BJ (cell line): ENCODE measurements at regions of chr19 and their contacts with region 1.

Region 1: DNA sequence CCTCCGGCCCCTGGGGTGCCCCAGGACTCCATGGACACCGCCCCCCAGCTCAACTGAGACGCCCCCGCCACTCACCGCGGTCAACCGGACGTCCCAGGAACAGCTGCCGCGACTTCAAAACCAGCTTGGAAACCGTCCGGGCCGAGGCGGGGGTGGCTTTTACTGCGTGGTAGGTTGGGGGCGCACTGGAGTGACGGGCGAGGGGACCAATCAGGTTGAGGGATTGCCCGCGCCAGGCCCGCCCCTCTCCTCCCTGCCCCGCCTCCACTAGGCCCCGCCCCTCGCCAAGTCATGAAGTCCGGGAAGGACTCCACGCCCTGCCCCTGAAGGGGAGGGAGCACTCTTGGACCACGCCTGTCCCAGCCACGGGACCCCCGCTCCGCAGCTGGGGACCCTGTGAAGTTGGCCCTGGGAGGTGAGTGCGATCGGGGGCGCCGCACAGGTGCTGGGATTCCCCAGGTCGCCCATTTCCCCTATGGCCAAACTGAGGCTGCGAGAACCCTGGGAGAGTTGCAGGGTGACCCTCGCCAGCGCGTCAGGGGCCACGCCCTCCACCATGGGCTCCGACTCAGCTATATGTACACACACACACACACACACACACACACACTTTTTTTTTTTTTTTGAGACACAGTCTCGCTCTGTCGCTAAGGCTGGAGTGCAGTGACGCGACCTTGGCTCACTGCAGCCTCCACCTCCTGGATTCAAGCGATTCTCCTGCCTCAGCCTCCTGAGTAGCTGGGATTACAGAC is at the start of gene PLIN3:
- DNase-seq: peak; percentile 67
- H3K4me3 ChIP-seq: peak within 1 kb of the TSS; percentile 92
- H3K27me3 ChIP-seq: no peaks in the 10 kb centered on the region
- CTCF ChIP-seq: no peak
- polyA plus RNA-seq, gene PLIN3: 128 and 211 TPM in 2 replicates

Region 2: GRCh38 chr19:4800591-4801355 is 66.9 kb before region 1 on chr19:
- CTCF ChIA-PET with region 1: no interaction called
- POLR2A ChIA-PET with region 1: no interaction called
- DNase-seq: no peak
- H3K4me3 ChIP-seq: no peak overlapping the region
- H3K27me3 ChIP-seq: no peaks in the 10 kb centered on the region
- CTCF ChIP-seq: no peak

Region 3: GRCh38 chr19:4815426-4816201 is 52.1 kb before region 1 on chr19:
- CTCF ChIA-PET with region 1: interaction called, 19 read pairs
- POLR2A ChIA-PET with region 1: no interaction called
- DNase-seq: no peak
- H3K4me3 ChIP-seq: no peak overlapping the region
- H3K27me3 ChIP-seq: no peaks in the 10 kb centered on the region
- CTCF ChIP-seq: no peak

Region 4: GRCh38 chr19:4851551-4852290 is 16.0 kb before region 1 on chr19:
- CTCF ChIA-PET with region 1: interaction called, 16 read pairs
- POLR2A ChIA-PET with region 1: no interaction called
- DNase-seq: no peak
- H3K4me3 ChIP-seq: no peak overlapping the region
- H3K27me3 ChIP-seq: no peaks in the 10 kb centered on the region
- CTCF ChIP-seq: peak; percentile 88

Region 5: GRCh38 chr19:5038631-5039271 is 171.0 kb after region 1 on chr19:
- CTCF ChIA-PET with region 1: interaction called, 42 read pairs
- POLR2A ChIA-PET with region 1: interaction called, 10 read pairs
- DNase-seq: no peak
- H3K4me3 ChIP-seq: no peak overlapping the region
- H3K27me3 ChIP-seq: no peaks in the 10 kb centered on the region
- CTCF ChIP-seq: peak; percentile 67